CD8-positive, alpha-beta T cell (primary cell): ENCODE measurements at regions of chr16 and their contacts with region 1.

Region 1: GRCh38 chr16:82263521-82264143 is 93.6 kb upstream of the MPHOSPH6 start:
- DNase-seq: peak in 8 of 9 experiments; percentile 28 to 76 (median 45)
- ATAC-seq: no peak
- H3K4me3 ChIP-seq: no peak overlapping the region
- H3K4me3 Mint-ChIP-seq: no peak overlapping the region
- H3K27ac ChIP-seq: no peak overlapping the region
- H3K27ac Mint-ChIP-seq: no peak overlapping the region
- H3K4me1 ChIP-seq: no peaks in the 10 kb centered on the region
- H3K4me1 Mint-ChIP-seq: no peaks in the 10 kb centered on the region
- H3K27me3 ChIP-seq: no peaks in the 10 kb centered on the region
- H3K27me3 Mint-ChIP-seq: peaks cover 14% of the 10 kb centered on the region
- CTCF ChIP-seq: peak; percentile 89

Region 2: GRCh38 chr16:82192665-82193064 is 71.0 kb before region 1 on chr16:
- CTCF ChIA-PET with region 1: no interaction called
- POLR2A ChIA-PET with region 1: no interaction called
- intact Hi-C with region 1: no loop called
- DNase-seq: peak in 3 of 9 experiments; percentile 1 to 54 (median 20)
- ATAC-seq: peak; percentile 92
- H3K4me3 ChIP-seq: no peak overlapping the region
- H3K4me3 Mint-ChIP-seq: no peak overlapping the region
- H3K27ac ChIP-seq: peak overlapping the region in 1 of 2 experiments; percentile 18
- H3K27ac Mint-ChIP-seq: peak overlapping the region; percentile 69
- H3K4me1 ChIP-seq: peaks cover 3% of the 10 kb centered on the region
- H3K4me1 Mint-ChIP-seq: peaks cover 14% of the 10 kb centered on the region
- H3K27me3 ChIP-seq: peaks cover 0 to 2% of the 10 kb centered on the region in 2 experiments
- H3K27me3 Mint-ChIP-seq: peaks cover 4% of the 10 kb centered on the region
- CTCF ChIP-seq: no peak

Region 3: GRCh38 chr16:82280867-82281266 is 17.2 kb after region 1 on chr16:
- CTCF ChIA-PET with region 1: interaction called, 18 read pairs
- POLR2A ChIA-PET with region 1: no interaction called
- intact Hi-C with region 1: no loop called
- DNase-seq: no peak
- ATAC-seq: no peak
- H3K4me3 ChIP-seq: no peak overlapping the region
- H3K4me3 Mint-ChIP-seq: no peak overlapping the region
- H3K27ac ChIP-seq: no peak overlapping the region
- H3K27ac Mint-ChIP-seq: no peak overlapping the region
- H3K4me1 ChIP-seq: no peaks in the 10 kb centered on the region
- H3K4me1 Mint-ChIP-seq: no peaks in the 10 kb centered on the region
- H3K27me3 ChIP-seq: no peaks in the 10 kb centered on the region
- H3K27me3 Mint-ChIP-seq: peaks cover 5% of the 10 kb centered on the region
- CTCF ChIP-seq: no peak

Region 4: GRCh38 chr16:82350560-82350959 is 86.9 kb after region 1 on chr16:
- CTCF ChIA-PET with region 1: no interaction called
- POLR2A ChIA-PET with region 1: no interaction called
- intact Hi-C with region 1: no loop called
- DNase-seq: no peak
- ATAC-seq: no peak
- H3K4me3 ChIP-seq: no peak overlapping the region
- H3K4me3 Mint-ChIP-seq: no peak overlapping the region
- H3K27ac ChIP-seq: no peak overlapping the region
- H3K27ac Mint-ChIP-seq: no peak overlapping the region
- H3K4me1 ChIP-seq: no peaks in the 10 kb centered on the region
- H3K4me1 Mint-ChIP-seq: no peaks in the 10 kb centered on the region
- H3K27me3 ChIP-seq: no peaks in the 10 kb centered on the region
- H3K27me3 Mint-ChIP-seq: no peaks in the 10 kb centered on the region
- CTCF ChIP-seq: no peak

Region 5: DNA sequence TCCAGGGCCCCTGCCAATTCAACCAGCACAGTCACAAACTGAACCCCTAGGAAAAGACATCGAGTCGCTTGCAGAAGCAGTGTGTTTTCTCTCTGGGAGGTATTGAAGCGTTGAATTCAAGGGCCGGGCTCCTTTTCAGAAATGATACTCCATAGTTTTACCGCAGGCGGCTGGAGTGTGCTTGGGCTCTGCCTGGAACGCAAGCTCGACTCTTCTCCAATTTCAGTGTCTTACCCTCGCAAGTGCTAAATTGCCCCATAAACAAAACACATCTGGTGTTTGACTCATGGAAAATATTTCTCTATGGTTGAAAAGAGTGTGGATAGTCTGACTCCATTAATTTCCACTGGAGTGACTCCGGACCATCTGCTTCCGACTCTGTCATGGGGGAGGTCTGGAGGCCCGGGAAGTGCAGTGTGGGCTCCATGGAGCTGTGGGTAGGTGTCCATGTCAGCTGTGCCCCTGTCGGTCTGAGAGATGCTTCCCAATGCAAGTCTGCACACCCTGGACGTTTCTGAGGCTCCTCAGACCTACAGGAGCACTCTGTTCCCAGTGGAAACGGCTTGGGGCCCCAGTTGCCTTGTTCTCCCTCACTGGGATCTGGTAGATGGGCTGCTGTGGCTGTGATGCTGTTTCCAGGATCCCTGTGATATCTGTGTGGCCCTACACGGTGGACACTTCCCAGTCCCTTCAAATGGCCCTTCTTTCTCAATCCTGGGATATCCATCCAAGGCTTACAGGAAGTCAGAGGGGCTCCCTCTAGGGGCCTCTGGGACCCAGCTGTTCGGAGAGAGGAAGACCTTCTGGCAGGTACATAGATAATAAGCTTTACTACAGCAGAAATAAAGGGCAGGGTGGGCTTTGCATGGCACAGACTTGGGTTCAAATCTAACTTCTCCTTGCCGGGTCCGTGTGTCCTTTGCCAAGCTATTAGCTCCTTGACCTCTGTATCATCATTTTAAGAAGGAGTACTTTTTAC is 243.3 kb after region 1 on chr16:
- CTCF ChIA-PET with region 1: no interaction called
- POLR2A ChIA-PET with region 1: no interaction called
- intact Hi-C with region 1: no loop called
- DNase-seq: no peak
- ATAC-seq: no peak
- H3K4me3 ChIP-seq: no peak overlapping the region
- H3K4me3 Mint-ChIP-seq: no peak overlapping the region
- H3K27ac ChIP-seq: no peak overlapping the region
- H3K27ac Mint-ChIP-seq: no peak overlapping the region
- H3K4me1 ChIP-seq: no peaks in the 10 kb centered on the region
- H3K4me1 Mint-ChIP-seq: no peaks in the 10 kb centered on the region
- H3K27me3 ChIP-seq: no peaks in the 10 kb centered on the region
- H3K27me3 Mint-ChIP-seq: peaks cover 12% of the 10 kb centered on the region
- CTCF ChIP-seq: no peak

Region 6: GRCh38 chr16:82639666-82640336 is 376.2 kb after region 1 on chr16:
- CTCF ChIA-PET with region 1: no interaction called
- POLR2A ChIA-PET with region 1: no interaction called
- intact Hi-C with region 1: loop called in 1 of 2 experiments (anchors 10 kb)
- DNase-seq: peak in 7 of 9 experiments; percentile 8 to 63 (median 48)
- ATAC-seq: peak; percentile 55
- H3K4me3 ChIP-seq: no peak overlapping the region
- H3K4me3 Mint-ChIP-seq: no peak overlapping the region
- H3K27ac ChIP-seq: no peak overlapping the region
- H3K27ac Mint-ChIP-seq: no peak overlapping the region
- H3K4me1 ChIP-seq: no peaks in the 10 kb centered on the region
- H3K4me1 Mint-ChIP-seq: peaks cover 5% of the 10 kb centered on the region
- H3K27me3 ChIP-seq: no peaks in the 10 kb centered on the region
- H3K27me3 Mint-ChIP-seq: no peaks in the 10 kb centered on the region
- CTCF ChIP-seq: peak; percentile 69

Region 7: DNA sequence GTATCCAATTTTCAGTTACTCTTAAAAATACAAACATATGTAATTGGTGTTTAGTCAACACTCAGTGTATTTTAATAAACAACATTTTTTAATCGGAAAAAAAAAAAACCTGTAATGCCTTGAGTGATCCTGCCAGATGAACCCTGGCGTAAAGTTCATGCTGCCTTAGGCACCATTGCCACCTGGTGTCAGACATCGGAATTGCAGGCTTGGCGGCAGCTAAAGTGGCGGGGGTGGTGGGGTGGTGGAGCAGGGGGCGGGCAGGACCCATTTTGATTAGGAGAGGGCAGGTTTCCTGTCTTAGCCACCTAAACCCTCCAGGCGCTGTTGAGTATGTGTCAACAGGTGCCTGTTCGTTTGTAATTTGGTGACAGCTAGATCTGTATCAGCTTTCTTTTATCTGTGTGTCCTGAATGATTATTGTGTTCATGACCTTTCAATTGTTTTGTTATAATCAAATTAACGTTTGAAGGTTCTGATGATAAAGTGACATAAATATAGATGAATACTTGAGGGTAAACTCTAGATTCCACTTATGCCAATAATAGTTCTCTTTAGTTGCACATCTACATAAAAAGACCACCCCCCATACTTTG is 951.9 kb after region 1 on chr16:
- CTCF ChIA-PET with region 1: interaction called, 23 read pairs
- POLR2A ChIA-PET with region 1: no interaction called
- intact Hi-C with region 1: loop called in 1 of 2 experiments (anchors 1 kb)
- DNase-seq: peak; percentile 3 to 57 (median 30)
- ATAC-seq: no peak
- H3K4me3 ChIP-seq: no peak overlapping the region
- H3K4me3 Mint-ChIP-seq: no peak overlapping the region
- H3K27ac ChIP-seq: no peak overlapping the region
- H3K27ac Mint-ChIP-seq: no peak overlapping the region
- H3K4me1 ChIP-seq: no peaks in the 10 kb centered on the region
- H3K4me1 Mint-ChIP-seq: no peaks in the 10 kb centered on the region
- H3K27me3 ChIP-seq: no peaks in the 10 kb centered on the region
- H3K27me3 Mint-ChIP-seq: peaks cover 3% of the 10 kb centered on the region
- CTCF ChIP-seq: peak; percentile 46

Region 8: DNA sequence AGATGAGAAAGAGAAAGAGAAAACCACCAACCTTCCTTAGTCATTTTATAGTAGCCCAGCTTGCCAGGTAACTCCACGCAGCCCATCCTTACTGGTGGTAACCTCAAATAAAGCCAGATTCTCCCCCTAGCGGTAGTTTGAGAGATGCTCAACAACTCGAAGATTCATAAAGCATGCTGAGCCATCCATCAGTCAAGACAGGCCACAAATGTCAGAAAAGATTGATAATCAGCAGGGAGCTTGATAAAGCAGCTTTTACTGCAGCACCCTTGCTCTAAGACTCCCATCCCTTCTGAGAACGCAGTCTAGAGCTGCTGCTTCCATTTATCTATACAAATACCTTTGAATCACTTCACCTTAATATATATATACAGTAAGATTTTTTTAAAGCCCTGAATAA is 1092.6 kb after region 1 on chr16:
- CTCF ChIA-PET with region 1: interaction called, 4 read pairs
- POLR2A ChIA-PET with region 1: no interaction called
- intact Hi-C with region 1: loop called (anchors 5 to 10 kb)
- DNase-seq: peak in 3 of 9 experiments; percentile 10 to 36 (median 11)
- ATAC-seq: no peak
- H3K4me3 ChIP-seq: no peak overlapping the region
- H3K4me3 Mint-ChIP-seq: no peak overlapping the region
- H3K27ac ChIP-seq: no peak overlapping the region
- H3K27ac Mint-ChIP-seq: no peak overlapping the region
- H3K4me1 ChIP-seq: no peaks in the 10 kb centered on the region
- H3K4me1 Mint-ChIP-seq: no peaks in the 10 kb centered on the region
- H3K27me3 ChIP-seq: no peaks in the 10 kb centered on the region
- H3K27me3 Mint-ChIP-seq: peaks cover 2% of the 10 kb centered on the region
- CTCF ChIP-seq: no peak